ENCODE measurements at regions of chr2 and their contacts with region 1.

Region 1: GRCh38 chr2:203238704-203239526 is at the start of gene CYP20A1:
- DNase-seq: peak; percentile 90 to 94
- H3K4me3 ChIP-seq: peak within 1 kb of the TSS; percentile 75 to 89 (median 82)
- H3K27ac ChIP-seq: peak within 1 kb of the TSS; percentile 84
- H3K4me1 ChIP-seq: no peaks in the 10 kb centered on the region
- H3K27me3 ChIP-seq: no peaks in the 10 kb centered on the region
- CTCF ChIP-seq: peak; percentile 15 to 44 (median 30)
- EP300 ChIP-seq: no peak
- POLR2A ChIP-seq: peak; percentile 75 to 95
- RAD21 ChIP-seq: peak; percentile 18 to 20; a peak in 2 of 4 replicates
- total RNA-seq, gene CYP20A1: 18.6 and 21.5 TPM in 2 replicates

Region 2: GRCh38 chr2:202911512-202912341 is 327.2 kb before region 1 on chr2 and contains the starts of genes CARF and WDR12:
- CTCF ChIA-PET with region 1: interaction called, 3 read pairs
- POLR2A ChIA-PET with region 1: interaction called, 10 read pairs
- DNase-seq: peak; percentile 56 to 88
- H3K4me3 ChIP-seq: peak within 1 kb of the TSS; percentile 96 to 99 (median 98)
- H3K27ac ChIP-seq: peak within 1 kb of the TSS; percentile 74
- H3K4me1 ChIP-seq: no peaks in the 10 kb centered on the region; a peak in 1 of 7 replicates
- H3K27me3 ChIP-seq: no peaks in the 10 kb centered on the region
- CTCF ChIP-seq: no peak
- EP300 ChIP-seq: no peak
- POLR2A ChIP-seq: peak; percentile 80 to 85
- RAD21 ChIP-seq: no peak
- total RNA-seq, gene CARF: 1.9 and 2.6 TPM in 2 replicates
- total RNA-seq, gene WDR12: 150 and 183 TPM in 2 replicates

Region 3: GRCh38 chr2:203035879-203036470 is 202.9 kb before region 1 on chr2:
- CTCF ChIA-PET with region 1: no interaction called
- POLR2A ChIA-PET with region 1: no interaction called
- DNase-seq: no peak
- H3K4me3 ChIP-seq: no peak overlapping the region
- H3K27ac ChIP-seq: no peak overlapping the region
- H3K4me1 ChIP-seq: no peaks in the 10 kb centered on the region
- H3K27me3 ChIP-seq: no peaks in the 10 kb centered on the region
- CTCF ChIP-seq: no peak
- EP300 ChIP-seq: no peak
- POLR2A ChIP-seq: no peak
- RAD21 ChIP-seq: no peak

Region 4: GRCh38 chr2:203225423-203226039 is 13.4 kb before region 1 on chr2:
- CTCF ChIA-PET with region 1: interaction called, 18 read pairs
- POLR2A ChIA-PET with region 1: interaction called, 4 read pairs
- DNase-seq: peak in 1 of 2 experiments; percentile 52
- H3K4me3 ChIP-seq: no peak overlapping the region
- H3K27ac ChIP-seq: no peak overlapping the region
- H3K4me1 ChIP-seq: no peaks in the 10 kb centered on the region
- H3K27me3 ChIP-seq: no peaks in the 10 kb centered on the region
- CTCF ChIP-seq: peak; percentile 60 to 71 (median 65); a peak in 3 of 4 replicates
- EP300 ChIP-seq: no peak
- POLR2A ChIP-seq: no peak
- RAD21 ChIP-seq: peak; percentile 63 to 70

Region 5: DNA sequence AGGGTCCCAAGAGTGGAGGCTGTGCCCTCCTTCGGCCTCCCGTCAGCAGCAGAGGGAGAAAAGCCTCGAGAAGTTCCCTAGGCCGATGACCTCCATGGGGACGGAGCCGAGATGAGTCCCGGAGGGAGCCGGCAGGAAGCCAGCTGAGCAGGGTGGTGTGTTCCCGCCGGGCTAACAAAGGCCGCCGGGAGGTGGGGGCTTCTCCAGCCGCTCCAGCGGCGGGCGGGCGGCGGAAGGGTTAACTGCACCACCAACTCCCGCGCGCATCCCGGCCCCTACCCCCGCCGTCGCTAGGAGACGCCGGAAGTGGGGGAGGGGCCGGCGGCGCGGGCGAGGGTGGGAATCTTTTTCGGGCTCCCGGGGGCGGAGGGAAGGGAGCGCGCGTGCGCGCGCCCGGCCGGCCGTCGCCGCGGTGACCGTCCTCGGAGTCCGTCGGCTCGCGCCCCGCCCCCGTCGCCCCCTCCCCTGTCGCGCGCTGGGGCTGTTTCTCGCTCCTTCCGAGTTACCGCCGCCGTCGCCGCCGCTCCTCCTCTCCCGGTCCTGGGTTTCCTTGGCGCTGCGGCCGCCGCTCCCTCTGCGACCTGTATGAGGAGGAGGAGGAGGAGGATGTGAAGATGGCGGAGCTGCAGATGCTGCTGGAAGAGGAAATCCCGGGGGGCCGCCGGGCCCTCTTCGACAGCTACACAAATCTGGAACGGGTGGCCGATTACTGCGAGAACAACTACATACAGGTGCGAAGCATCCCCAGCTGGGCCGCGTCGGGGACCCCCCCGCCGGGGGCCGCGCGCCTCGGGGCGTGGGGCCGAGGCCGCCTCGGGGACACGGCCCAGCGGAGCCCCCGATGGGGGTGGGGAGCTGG is 89.2 kb after region 1 on chr2 and contains the start of gene ABI2:
- CTCF ChIA-PET with region 1: no interaction called
- POLR2A ChIA-PET with region 1: interaction called, 14 read pairs
- DNase-seq: peak; percentile 81 to 95
- H3K4me3 ChIP-seq: peak within 1 kb of the TSS; percentile 84 to 99 (median 92)
- H3K27ac ChIP-seq: peak within 1 kb of the TSS; percentile 97
- H3K4me1 ChIP-seq: peaks cover 0 to 2% (median 0%) of the 10 kb centered on the region in 4 experiments; a peak in 1 of 7 replicates
- H3K27me3 ChIP-seq: no peaks in the 10 kb centered on the region
- CTCF ChIP-seq: no peak
- EP300 ChIP-seq: peak in 1 of 2 experiments; percentile 56; a peak in 1 of 3 replicates
- POLR2A ChIP-seq: peak; percentile 90 to 94
- RAD21 ChIP-seq: peak in 1 of 2 experiments; percentile 5; a peak in 1 of 4 replicates
- total RNA-seq, gene ABI2: 118 and 130 TPM in 2 replicates